Activated CD4-positive, alpha-beta memory T cell treated with anti-CD3 and anti-CD28 coated beads for 36 hours (primary cell): ENCODE measurements at regions of chr3 and their contacts with region 1.

Region 1: GRCh38 chr3:186953011-186953487 is 22.7 kb downstream of the ST6GAL1 start:
- DNase-seq: peak; percentile 37
- H3K4me3 Mint-ChIP-seq: peak overlapping the region; percentile 21
- H3K27ac Mint-ChIP-seq: peak overlapping the region; percentile 86
- H3K4me1 Mint-ChIP-seq: peaks cover 91% of the 10 kb centered on the region
- H3K27me3 Mint-ChIP-seq: no peaks in the 10 kb centered on the region

Region 2: DNA sequence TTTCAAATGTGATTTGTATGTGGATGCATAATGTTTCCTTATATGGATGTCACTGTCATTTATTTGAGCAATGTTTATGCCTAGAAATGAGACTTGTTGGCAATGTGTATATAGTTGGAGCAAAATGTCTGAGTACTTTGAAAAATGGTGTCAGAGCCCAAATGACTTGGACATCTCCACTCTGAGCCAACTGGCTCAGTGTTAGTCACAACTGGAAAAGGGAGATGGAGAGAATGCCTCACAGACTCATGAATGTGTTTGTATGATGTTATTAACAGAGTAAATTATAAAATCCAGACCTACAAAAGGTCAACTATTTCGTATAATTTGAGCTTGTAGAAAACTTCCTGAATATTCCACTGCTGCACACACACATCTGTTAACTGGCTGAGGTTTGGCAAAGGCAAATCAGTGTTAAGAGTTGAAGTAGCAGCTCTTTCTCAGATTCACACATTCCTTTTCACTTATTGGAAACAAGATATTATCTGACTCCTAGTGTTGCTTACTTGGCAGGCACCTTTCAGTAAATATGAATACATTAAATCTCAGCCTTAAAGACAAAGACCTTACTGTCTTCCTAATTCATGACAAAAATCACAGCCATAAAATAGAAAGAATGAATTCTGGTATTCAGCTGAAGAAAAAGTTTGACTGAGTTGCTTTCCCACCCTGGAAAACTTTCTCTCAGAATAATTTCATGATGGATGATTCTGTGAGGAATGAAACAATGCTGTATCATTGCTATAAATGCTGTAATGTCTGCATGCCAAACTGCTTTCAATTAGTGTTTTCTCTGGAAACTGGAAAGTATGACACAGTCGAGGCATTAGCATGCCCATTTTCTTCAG is 83.6 kb before region 1 on chr3:
- CTCF ChIA-PET with region 1: no interaction called
- POLR2A ChIA-PET with region 1: no interaction called
- intact Hi-C with region 1: loop called (anchors 5 kb)
- DNase-seq: peak; percentile 28
- H3K4me3 Mint-ChIP-seq: no peak overlapping the region
- H3K27ac Mint-ChIP-seq: peak overlapping the region; percentile 82
- H3K4me1 Mint-ChIP-seq: peaks cover 35% of the 10 kb centered on the region
- H3K27me3 Mint-ChIP-seq: no peaks in the 10 kb centered on the region

Region 3: GRCh38 chr3:186965141-186965879 is 12.3 kb after region 1 on chr3:
- CTCF ChIA-PET with region 1: interaction called, 4 read pairs
- POLR2A ChIA-PET with region 1: interaction called, 3 read pairs
- intact Hi-C with region 1: loop called (anchors 1 kb)
- DNase-seq: peak; percentile 34
- H3K4me3 Mint-ChIP-seq: no peak overlapping the region
- H3K27ac Mint-ChIP-seq: peak overlapping the region; percentile 67
- H3K4me1 Mint-ChIP-seq: peaks cover 68% of the 10 kb centered on the region
- H3K27me3 Mint-ChIP-seq: no peaks in the 10 kb centered on the region

Region 4: GRCh38 chr3:186985661-186986364 is 32.8 kb after region 1 on chr3:
- CTCF ChIA-PET with region 1: no interaction called
- POLR2A ChIA-PET with region 1: interaction called, 3 read pairs
- intact Hi-C with region 1: loop called (anchors 2 kb)
- DNase-seq: no peak
- H3K4me3 Mint-ChIP-seq: no peak overlapping the region
- H3K27ac Mint-ChIP-seq: no peak overlapping the region
- H3K4me1 Mint-ChIP-seq: peaks cover 41% of the 10 kb centered on the region
- H3K27me3 Mint-ChIP-seq: no peaks in the 10 kb centered on the region

Region 5: GRCh38 chr3:187000711-187001151 is 47.7 kb after region 1 on chr3:
- CTCF ChIA-PET with region 1: no interaction called
- POLR2A ChIA-PET with region 1: interaction called, 5 read pairs
- intact Hi-C with region 1: loop called (anchors 1 kb)
- DNase-seq: peak; percentile 63
- H3K4me3 Mint-ChIP-seq: peak overlapping the region; percentile 5
- H3K27ac Mint-ChIP-seq: peak overlapping the region; percentile 87
- H3K4me1 Mint-ChIP-seq: peaks cover 76% of the 10 kb centered on the region
- H3K27me3 Mint-ChIP-seq: no peaks in the 10 kb centered on the region

Region 6: GRCh38 chr3:187041362-187042307 is 88.6 kb after region 1 on chr3:
- CTCF ChIA-PET with region 1: no interaction called
- POLR2A ChIA-PET with region 1: interaction called, 6 read pairs
- intact Hi-C with region 1: loop called (anchors 5 kb)
- DNase-seq: peak; percentile 70
- H3K4me3 Mint-ChIP-seq: peak overlapping the region; percentile 47
- H3K27ac Mint-ChIP-seq: peak overlapping the region; percentile 92
- H3K4me1 Mint-ChIP-seq: peaks cover 82% of the 10 kb centered on the region
- H3K27me3 Mint-ChIP-seq: no peaks in the 10 kb centered on the region

Region 7: DNA sequence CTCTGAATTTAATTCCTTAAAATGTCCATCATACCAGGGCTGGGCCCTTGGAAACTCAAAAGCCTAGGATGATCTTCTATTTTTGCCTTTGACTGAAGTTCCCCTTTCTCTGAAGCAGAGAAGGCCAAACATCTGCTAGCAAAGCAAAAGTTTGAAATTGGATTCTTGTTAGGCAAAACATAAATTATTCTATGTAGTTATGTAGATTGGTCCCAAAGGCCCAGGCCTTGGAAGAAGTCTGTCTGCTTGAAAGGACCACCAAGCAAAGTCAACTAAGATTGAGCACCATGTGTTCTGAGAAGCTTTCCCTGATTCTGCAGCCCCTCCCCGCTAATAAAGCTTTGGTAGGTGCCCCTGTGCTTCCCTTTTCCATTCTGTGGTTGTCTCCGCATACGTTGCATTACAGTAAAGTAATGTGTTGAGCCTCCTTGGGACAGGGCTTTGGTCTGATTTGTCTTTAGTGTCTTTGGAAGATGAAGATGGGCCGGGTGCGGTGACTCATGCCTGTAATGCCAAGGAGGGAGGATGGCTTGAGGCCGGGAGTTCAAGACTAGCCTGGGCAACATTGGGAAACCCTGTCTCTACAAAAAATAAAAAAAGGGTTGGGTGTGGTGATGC is 129.8 kb after region 1 on chr3:
- CTCF ChIA-PET with region 1: no interaction called
- POLR2A ChIA-PET with region 1: no interaction called
- intact Hi-C with region 1: no loop called
- DNase-seq: no peak
- H3K4me3 Mint-ChIP-seq: no peak overlapping the region
- H3K27ac Mint-ChIP-seq: no peak overlapping the region
- H3K4me1 Mint-ChIP-seq: peaks cover 11% of the 10 kb centered on the region
- H3K27me3 Mint-ChIP-seq: no peaks in the 10 kb centered on the region

Region 8: GRCh38 chr3:187139126-187139894 is 186.3 kb after region 1 on chr3 and contains the start of gene RPL39L:
- CTCF ChIA-PET with region 1: interaction called, 4 read pairs
- POLR2A ChIA-PET with region 1: no interaction called
- intact Hi-C with region 1: loop called (anchors 5 kb)
- DNase-seq: peak; percentile 96
- H3K4me3 Mint-ChIP-seq: peak within 1 kb of the TSS; percentile 91
- H3K27ac Mint-ChIP-seq: peak within 1 kb of the TSS; percentile 93
- H3K4me1 Mint-ChIP-seq: peaks cover 22% of the 10 kb centered on the region
- H3K27me3 Mint-ChIP-seq: no peaks in the 10 kb centered on the region
- total RNA-seq, gene RPL39L: 22.5 to 25.2 TPM